ENCODE measurements at regions of chr20 and their contacts with region 1.

Region 1: DNA sequence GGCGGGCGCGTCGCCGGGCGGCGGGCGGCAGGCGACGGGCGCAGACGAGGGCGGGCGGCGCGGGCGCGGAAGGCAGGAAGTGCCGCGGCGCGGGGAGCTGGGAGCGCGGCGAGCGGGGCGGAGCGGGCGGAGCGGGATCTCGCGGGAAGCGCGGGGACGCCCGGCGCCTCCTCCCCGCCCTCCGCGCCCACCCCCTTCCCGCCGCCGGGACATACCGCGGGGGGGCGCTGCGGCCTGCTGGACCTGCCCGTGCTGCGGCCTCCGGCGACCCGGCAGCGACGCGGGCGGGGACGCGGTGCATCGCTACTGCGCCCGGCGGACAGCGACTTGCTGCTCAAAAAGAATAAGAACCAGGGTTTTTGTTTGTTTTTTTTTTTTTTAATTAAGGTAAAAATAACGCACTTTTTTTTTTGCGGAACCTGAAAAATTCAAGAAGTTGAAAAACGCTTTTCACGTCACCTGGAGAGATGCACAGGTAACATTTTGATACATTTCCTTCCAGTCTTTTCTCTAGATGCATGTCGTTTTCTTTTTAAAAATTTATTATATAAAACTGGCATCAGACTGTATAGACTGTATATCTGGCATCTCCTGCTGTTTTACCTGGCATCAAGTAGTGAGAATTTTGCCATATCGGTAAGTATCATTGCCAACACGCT is at the start of gene CENPB:
- DNase-seq: peak; percentile 91
- ATAC-seq: peak; percentile 91 to 93
- total RNA-seq, gene CENPB: 70.8 to 93.6 TPM

Region 2: GRCh38 chr20:3820048-3820900 is 33.5 kb after region 1 on chr20 and contains the start of gene AP5S1:
- intact Hi-C with region 1: loop called (anchors 1 to 5 kb)
- DNase-seq: peak; percentile 98
- ATAC-seq: peak; percentile 93 to 94
- total RNA-seq, gene AP5S1: 11.8 to 14.7 TPM

Region 3: DNA sequence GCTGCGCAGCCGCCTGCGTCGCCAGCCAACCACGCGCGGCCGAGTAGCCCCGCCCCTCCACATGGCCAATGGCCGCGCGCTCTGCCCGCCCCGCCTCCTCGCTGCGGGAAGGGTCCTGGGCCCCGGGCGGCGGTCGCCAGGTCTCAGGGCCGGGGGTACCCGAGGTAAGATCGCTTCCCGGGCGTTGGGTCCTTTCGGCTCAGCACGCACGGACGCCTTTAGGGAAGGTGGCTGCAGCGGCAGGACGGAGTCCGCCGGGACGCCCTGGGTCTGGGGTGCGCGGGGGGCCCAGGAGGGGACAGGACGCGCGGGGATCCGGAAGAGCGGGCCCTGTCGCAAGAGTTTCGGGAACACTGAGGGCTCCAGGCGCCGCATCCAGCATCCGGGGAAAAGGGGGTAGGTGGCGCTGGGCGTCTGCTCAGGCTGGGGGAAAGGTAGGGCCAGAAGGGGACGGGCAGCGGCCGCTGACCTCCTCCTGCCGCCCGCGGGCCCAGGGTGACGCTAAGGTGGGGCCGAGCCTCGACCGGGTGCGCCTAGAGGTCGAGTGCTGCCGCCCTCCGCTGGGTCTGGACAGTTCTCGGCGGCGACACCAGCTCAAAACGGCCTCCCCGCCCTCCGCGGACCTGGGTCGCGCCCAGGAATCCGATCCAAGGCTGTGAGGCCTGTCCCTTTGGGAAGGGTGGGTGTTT is 60.1 kb after region 1 on chr20 and contains the start of gene MAVS:
- intact Hi-C with region 1: loop called in 1 of 2 experiments (anchors 10 kb)
- DNase-seq: peak; percentile 93
- ATAC-seq: peak; percentile 98 to 99
- total RNA-seq, gene MAVS: 28.9 to 31.1 TPM

Region 4: DNA sequence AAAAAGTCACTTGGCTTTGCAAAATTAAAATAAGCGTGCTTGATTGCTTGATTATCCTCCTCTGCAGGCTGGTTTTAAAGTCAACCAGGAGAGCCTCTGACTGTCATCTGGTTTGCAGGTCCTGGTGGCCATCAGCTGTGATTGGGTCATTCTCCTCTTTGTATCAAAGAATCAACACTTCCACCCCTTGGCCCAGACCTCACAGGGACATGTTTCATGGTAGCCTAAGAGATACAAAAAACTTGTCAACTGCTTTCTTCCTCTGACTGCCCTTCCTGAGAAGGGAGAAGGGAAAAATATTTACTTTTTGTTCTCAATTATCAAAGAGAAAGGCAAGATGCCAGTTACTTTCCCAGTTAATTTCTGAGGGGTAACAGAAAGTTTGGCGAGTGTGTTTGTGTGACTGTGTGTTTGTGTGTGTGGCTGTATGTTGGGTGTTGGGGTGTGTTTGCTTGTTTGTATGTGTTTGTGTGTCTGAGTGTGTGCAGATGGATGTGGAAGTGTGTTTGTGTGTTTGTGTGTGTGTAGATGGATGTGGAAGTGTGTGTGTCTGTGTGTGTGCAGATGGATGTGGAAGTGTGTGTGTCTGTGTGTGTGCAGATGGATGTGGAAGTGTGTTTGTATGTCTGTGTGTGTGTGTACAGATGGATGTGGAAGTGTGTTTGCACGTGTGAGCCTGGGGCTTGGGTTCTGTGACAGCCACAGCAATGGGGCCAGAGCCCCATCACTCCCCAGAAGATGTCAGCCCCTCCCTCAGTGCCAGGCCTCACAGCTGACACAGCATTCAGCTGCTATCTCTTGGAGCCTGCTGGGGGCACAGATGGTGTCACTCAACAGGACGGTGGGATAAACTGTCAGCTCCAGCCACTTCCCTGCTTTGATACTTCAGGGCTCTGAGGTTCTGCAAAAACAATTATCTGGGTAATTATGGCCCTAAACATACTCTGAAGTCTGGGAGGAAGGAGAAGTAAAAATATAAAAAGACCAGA is 327.1 kb after region 1 on chr20:
- intact Hi-C with region 1: no loop called
- DNase-seq: no peak
- ATAC-seq: no peak

Region 5: DNA sequence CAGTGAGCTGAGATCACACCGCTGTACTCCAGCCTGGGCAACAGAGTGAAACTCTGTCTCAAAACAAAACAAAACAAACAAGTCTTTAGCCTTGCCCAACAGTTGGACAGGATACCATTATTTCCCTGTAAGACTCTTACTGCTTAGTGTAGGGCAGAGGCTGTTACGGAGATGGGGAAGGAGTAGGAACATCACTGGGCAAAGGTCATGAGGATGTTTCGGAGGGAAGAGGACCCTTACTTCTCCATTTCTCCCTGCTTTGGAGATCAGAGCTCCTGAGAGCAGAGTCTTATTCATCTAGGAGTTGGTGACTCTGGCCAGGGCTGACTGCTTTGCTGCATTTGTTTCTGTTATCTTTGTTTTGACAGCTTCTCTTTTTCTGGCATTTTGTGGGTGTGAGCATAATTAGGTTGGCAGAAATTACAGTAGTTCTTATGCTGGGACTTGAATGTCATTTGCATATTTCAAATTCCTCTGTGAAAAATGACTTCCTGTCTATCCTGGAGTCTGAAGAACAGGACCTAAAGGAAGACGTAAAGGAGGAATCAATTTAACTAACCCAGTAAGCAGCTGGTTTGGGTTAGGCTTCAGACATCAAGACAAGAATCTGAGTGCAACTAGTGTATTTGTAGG is 1429.0 kb after region 1 on chr20:
- intact Hi-C with region 1: no loop called
- DNase-seq: no peak
- ATAC-seq: peak in 1 of 2 donors; percentile 10

Measured in left cardiac atrium (tissue), 4 donors.